ENCODE measurements at regions of chr15 and their contacts with region 1.

Region 1: DNA sequence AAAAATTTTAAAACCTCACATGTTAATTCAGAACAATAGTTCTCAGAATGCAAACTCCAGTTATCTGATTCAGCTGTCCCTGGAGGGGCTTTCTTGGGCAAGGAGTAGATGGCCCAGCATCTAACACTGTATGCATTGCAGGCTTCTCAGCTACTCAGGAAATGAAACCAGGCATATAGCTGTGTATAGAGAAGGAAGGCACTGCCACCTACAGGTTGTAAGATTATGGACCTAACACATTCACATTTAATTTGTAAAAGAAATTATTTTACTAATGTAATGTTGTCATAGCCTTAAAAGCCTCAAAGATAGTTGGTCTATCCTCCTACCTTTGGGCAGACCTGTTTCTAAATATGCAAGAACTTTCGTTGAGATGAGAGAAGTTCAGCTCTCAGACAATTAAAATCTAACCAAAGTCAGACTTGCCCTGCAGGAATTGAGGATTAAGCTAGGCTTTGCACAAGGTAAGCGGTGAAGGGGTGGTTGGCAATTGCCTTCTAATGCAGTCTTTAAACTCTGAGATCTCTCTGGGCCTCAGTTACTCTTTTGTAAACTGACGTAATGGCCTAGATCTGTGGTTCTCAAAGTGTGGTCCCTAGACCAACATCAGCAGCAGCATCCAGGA is 132.8 kb upstream of the SLC24A5 start:
- DNase-seq: peak in 3 of 6 donors; percentile 12 to 48 (median 18)
- ATAC-seq: peak; percentile 88 to 98 (median 96)
- H3K4me3 ChIP-seq: no peak overlapping the region
- H3K27ac ChIP-seq: no peak overlapping the region
- H3K4me1 ChIP-seq: no peaks in the 10 kb centered on the region
- H3K27me3 ChIP-seq: no peaks in the 10 kb centered on the region
- CTCF ChIP-seq: peak; percentile 27 to 51 (median 37)

Region 2: DNA sequence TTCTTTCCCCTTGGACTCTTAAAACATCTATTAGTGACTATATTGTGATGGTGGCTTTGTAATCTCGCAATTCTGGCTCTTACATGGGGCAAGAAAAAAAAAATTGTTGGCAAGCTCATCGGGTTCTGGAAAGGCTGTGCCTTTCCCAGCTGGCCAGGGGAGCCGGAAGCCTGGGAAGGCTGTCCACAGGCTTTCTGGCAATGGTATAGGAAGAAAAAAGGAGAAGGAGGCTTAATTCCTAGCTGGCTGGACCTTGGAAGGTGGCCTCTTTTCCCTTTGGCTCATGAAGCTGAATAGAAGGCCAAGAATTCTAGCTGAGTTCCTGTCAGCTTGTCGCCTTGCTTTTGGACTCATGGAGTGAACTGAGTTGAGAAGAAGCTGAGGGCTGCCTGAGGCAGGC is 514.2 kb before region 1 on chr15:
- intact Hi-C with region 1: loop called in 1 of 3 experiments (anchors 10 kb)
- DNase-seq: peak; percentile 39 to 73 (median 62)
- ATAC-seq: peak; percentile 85 to 92 (median 87)
- H3K4me3 ChIP-seq: no peak overlapping the region
- H3K27ac ChIP-seq: no peak overlapping the region
- H3K4me1 ChIP-seq: peaks cover 0 to 4% (median 0%) of the 10 kb centered on the region in 3 donors
- H3K27me3 ChIP-seq: no peaks in the 10 kb centered on the region
- CTCF ChIP-seq: no peak

Region 3: GRCh38 chr15:47717036-47717611 is 270.9 kb before region 1 on chr15 and contains the start of gene SEMA6D:
- intact Hi-C with region 1: loop called in 1 of 3 experiments (anchors 5 kb)
- DNase-seq: peak; percentile 74 to 90 (median 78)
- ATAC-seq: peak; percentile 72 to 86 (median 85)
- H3K4me3 ChIP-seq: peak within 1 kb of the TSS; percentile 58 to 85 (median 78)
- H3K27ac ChIP-seq: peak within 1 kb of the TSS; percentile 16 to 74 (median 52)
- H3K4me1 ChIP-seq: peaks cover 4 to 14% (median 7%) of the 10 kb centered on the region in 3 donors
- H3K27me3 ChIP-seq: no peaks in the 10 kb centered on the region
- CTCF ChIP-seq: peak in 2 of 4 donors; percentile 25 to 38
- total RNA-seq, gene SEMA6D: 4.7 to 14.1 (median 6.3) TPM

Region 4: GRCh38 chr15:48086576-48086975 is 98.6 kb after region 1 on chr15:
- intact Hi-C with region 1: no loop called
- DNase-seq: no peak
- ATAC-seq: peak in 1 of 4 donors; percentile 45
- H3K4me3 ChIP-seq: no peak overlapping the region
- H3K27ac ChIP-seq: no peak overlapping the region
- H3K4me1 ChIP-seq: no peaks in the 10 kb centered on the region
- H3K27me3 ChIP-seq: no peaks in the 10 kb centered on the region
- CTCF ChIP-seq: no peak

Measured in pancreas (tissue), 10 donors.